H1 (cell line): ENCODE measurements at regions of chr7 and their contacts with region 1.

Region 1: GRCh38 chr7:141262101-141263090 is 188.5 kb downstream of the TMEM178B start:
- DNase-seq: no peak
- H3K4me3 ChIP-seq: no peak overlapping the region
- H3K27ac ChIP-seq: no peak overlapping the region
- H3K4me1 ChIP-seq: no peaks in the 10 kb centered on the region; a peak in 2 of 7 replicates
- H3K27me3 ChIP-seq: no peaks in the 10 kb centered on the region
- CTCF ChIP-seq: peak in 2 of 3 experiments; percentile 57 to 65; a peak in 3 of 4 replicates
- EP300 ChIP-seq: no peak
- POLR2A ChIP-seq: no peak
- RAD21 ChIP-seq: peak; percentile 55 to 62

Region 2: GRCh38 chr7:141210862-141211261 is 51.5 kb before region 1 on chr7:
- CTCF ChIA-PET with region 1: no interaction called
- POLR2A ChIA-PET with region 1: no interaction called
- DNase-seq: no peak
- H3K4me3 ChIP-seq: peak overlapping the region in 1 of 4 experiments; percentile 3; a peak in 1 of 8 replicates
- H3K27ac ChIP-seq: no peak overlapping the region
- H3K4me1 ChIP-seq: peaks cover 14 to 36% (median 23%) of the 10 kb centered on the region in 4 experiments
- H3K27me3 ChIP-seq: no peaks in the 10 kb centered on the region
- CTCF ChIP-seq: no peak
- EP300 ChIP-seq: no peak
- POLR2A ChIP-seq: no peak
- RAD21 ChIP-seq: no peak

Region 3: DNA sequence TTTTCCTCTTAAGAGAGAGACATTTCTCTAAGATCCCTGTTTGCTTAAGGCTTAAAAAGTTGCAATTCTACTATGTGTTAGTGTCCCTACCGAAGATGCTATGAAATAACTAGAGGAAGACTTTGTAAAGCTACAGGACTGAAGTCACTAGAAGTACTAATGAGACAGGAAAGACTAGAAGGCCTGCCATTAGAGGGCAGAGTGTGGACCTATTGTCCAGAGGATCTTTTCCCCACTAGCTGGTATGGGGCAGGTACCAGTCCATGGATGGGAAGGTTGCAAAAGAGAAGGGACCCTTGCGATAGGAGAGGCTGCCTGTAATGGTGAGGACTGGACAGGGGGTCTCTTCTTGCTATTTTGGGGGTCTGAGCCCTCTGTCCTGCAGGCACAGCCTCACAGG is 10.4 kb before region 1 on chr7:
- CTCF ChIA-PET with region 1: interaction called, 25 read pairs
- POLR2A ChIA-PET with region 1: no interaction called
- DNase-seq: no peak
- H3K4me3 ChIP-seq: no peak overlapping the region
- H3K27ac ChIP-seq: no peak overlapping the region
- H3K4me1 ChIP-seq: peaks cover 0 to 3% (median 0%) of the 10 kb centered on the region in 4 experiments; a peak in 1 of 7 replicates
- H3K27me3 ChIP-seq: no peaks in the 10 kb centered on the region
- CTCF ChIP-seq: peak in 1 of 3 experiments; percentile 29; a peak in 1 of 4 replicates
- EP300 ChIP-seq: no peak
- POLR2A ChIP-seq: no peak
- RAD21 ChIP-seq: no peak

Region 4: DNA sequence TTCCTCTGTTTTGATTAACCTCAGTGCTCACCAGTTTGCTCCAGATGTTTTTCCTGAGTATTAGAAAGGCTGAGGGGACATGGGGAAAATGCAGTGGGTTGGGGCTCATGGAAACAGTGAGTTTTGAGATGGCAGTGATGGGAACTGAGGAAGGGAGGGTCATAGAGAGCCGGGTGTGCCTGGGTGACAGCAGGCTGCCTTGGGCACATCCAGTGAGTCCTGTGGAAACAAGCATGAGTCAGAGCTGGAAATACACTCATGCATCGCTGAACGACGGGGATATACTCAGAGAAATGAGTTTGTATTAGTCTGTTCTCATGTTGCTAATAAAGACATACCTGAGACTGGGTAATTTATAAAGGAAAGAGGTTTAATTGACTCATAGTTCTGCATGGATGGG is 13.6 kb after region 1 on chr7:
- CTCF ChIA-PET with region 1: interaction called, 19 read pairs
- POLR2A ChIA-PET with region 1: no interaction called
- DNase-seq: no peak
- H3K4me3 ChIP-seq: no peak overlapping the region
- H3K27ac ChIP-seq: no peak overlapping the region
- H3K4me1 ChIP-seq: no peaks in the 10 kb centered on the region; a peak in 1 of 7 replicates
- H3K27me3 ChIP-seq: no peaks in the 10 kb centered on the region
- CTCF ChIP-seq: no peak
- EP300 ChIP-seq: no peak
- POLR2A ChIP-seq: no peak
- RAD21 ChIP-seq: no peak